CD4-positive, alpha-beta T cell (primary cell): ENCODE measurements at regions of chr22 and their contacts with region 1.

Region 1: DNA sequence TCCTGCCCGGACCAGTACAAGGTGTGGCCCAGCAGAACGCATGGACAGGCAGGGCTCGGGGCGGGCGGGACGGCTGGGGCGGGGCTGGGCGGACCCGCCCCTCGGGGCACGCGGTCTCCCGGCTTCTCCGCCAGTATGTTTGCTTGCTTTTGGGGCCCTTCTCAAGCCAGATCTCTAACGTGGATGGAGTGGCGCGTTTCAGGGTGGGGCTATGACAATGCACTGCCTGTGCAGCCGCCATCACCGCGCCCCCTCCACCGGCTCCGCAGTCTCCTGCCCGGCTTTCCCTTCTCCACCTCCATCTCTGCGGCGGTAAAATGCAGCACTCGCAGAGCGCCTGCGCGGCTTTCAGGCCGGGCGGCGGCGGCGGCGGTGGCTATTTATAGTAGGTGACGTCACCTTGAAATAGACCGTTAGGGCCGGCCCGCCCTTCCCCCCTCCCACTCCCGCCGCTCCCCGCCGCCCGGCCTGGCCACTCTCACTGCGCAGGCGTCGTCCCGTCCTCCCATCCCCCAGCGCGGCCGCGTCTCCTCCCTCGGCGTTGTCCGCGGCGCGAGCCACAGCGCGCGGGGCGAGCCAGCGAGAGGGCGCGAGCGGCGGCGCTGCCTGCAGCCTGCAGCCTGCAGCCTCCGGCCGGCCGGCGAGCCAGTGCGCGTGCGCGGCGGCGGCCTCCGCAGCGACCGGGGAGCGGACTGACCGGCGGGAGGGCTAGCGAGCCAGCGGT is at the start of gene YWHAH:
- DNase-seq: peak; percentile 72 to 93 (median 81)
- ATAC-seq: peak; percentile 65
- H3K4me3 ChIP-seq: peak within 1 kb of the TSS; percentile 73
- H3K4me3 Mint-ChIP-seq: peak within 1 kb of the TSS; percentile 94
- H3K27ac ChIP-seq: peak within 1 kb of the TSS; percentile 77 to 84
- H3K27ac Mint-ChIP-seq: no peak within 1 kb of the TSS
- H3K4me1 ChIP-seq: peaks cover 27% of the 10 kb centered on the region
- H3K4me1 Mint-ChIP-seq: peaks cover 19% of the 10 kb centered on the region
- H3K27me3 ChIP-seq: no peaks in the 10 kb centered on the region
- H3K27me3 Mint-ChIP-seq: no peaks in the 10 kb centered on the region
- CTCF ChIP-seq: no peak
- total RNA-seq, gene YWHAH: 24.4 to 26.1 TPM

Region 2: GRCh38 chr22:30591588-30592359 is 1352.4 kb before region 1 on chr22 and contains the start of gene PES1:
- CTCF ChIA-PET with region 1: no interaction called
- POLR2A ChIA-PET with region 1: no interaction called
- intact Hi-C with region 1: loop called in 1 of 2 experiments (anchors 10 kb)
- DNase-seq: peak; percentile 91 to 99 (median 94)
- ATAC-seq: peak; percentile 96
- H3K4me3 ChIP-seq: peak within 1 kb of the TSS; percentile 96
- H3K4me3 Mint-ChIP-seq: no peak within 1 kb of the TSS
- H3K27ac ChIP-seq: peak within 1 kb of the TSS; percentile 85 to 97
- H3K27ac Mint-ChIP-seq: no peak within 1 kb of the TSS
- H3K4me1 ChIP-seq: peaks cover 16% of the 10 kb centered on the region
- H3K4me1 Mint-ChIP-seq: no peaks in the 10 kb centered on the region
- H3K27me3 ChIP-seq: no peaks in the 10 kb centered on the region
- H3K27me3 Mint-ChIP-seq: no peaks in the 10 kb centered on the region
- CTCF ChIP-seq: no peak
- total RNA-seq, gene PES1: 28.4 to 30.5 TPM

Region 3: GRCh38 chr22:31661851-31662656 is 282.1 kb before region 1 on chr22 and contains the start of gene PISD:
- CTCF ChIA-PET with region 1: interaction called, 3 read pairs
- POLR2A ChIA-PET with region 1: interaction called, 9 read pairs
- intact Hi-C with region 1: loop called (anchors 1 kb)
- DNase-seq: peak; percentile 92 to 99 (median 96)
- ATAC-seq: peak; percentile 90
- H3K4me3 ChIP-seq: peak within 1 kb of the TSS; percentile 95
- H3K4me3 Mint-ChIP-seq: peak within 1 kb of the TSS; percentile 99
- H3K27ac ChIP-seq: peak within 1 kb of the TSS; percentile 62 to 70
- H3K27ac Mint-ChIP-seq: peak within 1 kb of the TSS; percentile 98
- H3K4me1 ChIP-seq: peaks cover 29% of the 10 kb centered on the region
- H3K4me1 Mint-ChIP-seq: peaks cover 38% of the 10 kb centered on the region
- H3K27me3 ChIP-seq: no peaks in the 10 kb centered on the region
- H3K27me3 Mint-ChIP-seq: no peaks in the 10 kb centered on the region
- CTCF ChIP-seq: no peak
- total RNA-seq, gene PISD: 23.4 to 25.3 TPM

Region 4: GRCh38 chr22:31846161-31847115 is 97.7 kb before region 1 on chr22:
- CTCF ChIA-PET with region 1: no interaction called
- POLR2A ChIA-PET with region 1: no interaction called
- intact Hi-C with region 1: loop called in 1 of 2 experiments (anchors 10 kb)
- DNase-seq: peak in 2 of 14 experiments; percentile 10 to 15
- ATAC-seq: no peak
- H3K4me3 ChIP-seq: no peak overlapping the region
- H3K4me3 Mint-ChIP-seq: no peak overlapping the region
- H3K27ac ChIP-seq: no peak overlapping the region
- H3K27ac Mint-ChIP-seq: no peak overlapping the region
- H3K4me1 ChIP-seq: no peaks in the 10 kb centered on the region
- H3K4me1 Mint-ChIP-seq: no peaks in the 10 kb centered on the region
- H3K27me3 ChIP-seq: no peaks in the 10 kb centered on the region
- H3K27me3 Mint-ChIP-seq: no peaks in the 10 kb centered on the region
- CTCF ChIP-seq: no peak

Region 5: DNA sequence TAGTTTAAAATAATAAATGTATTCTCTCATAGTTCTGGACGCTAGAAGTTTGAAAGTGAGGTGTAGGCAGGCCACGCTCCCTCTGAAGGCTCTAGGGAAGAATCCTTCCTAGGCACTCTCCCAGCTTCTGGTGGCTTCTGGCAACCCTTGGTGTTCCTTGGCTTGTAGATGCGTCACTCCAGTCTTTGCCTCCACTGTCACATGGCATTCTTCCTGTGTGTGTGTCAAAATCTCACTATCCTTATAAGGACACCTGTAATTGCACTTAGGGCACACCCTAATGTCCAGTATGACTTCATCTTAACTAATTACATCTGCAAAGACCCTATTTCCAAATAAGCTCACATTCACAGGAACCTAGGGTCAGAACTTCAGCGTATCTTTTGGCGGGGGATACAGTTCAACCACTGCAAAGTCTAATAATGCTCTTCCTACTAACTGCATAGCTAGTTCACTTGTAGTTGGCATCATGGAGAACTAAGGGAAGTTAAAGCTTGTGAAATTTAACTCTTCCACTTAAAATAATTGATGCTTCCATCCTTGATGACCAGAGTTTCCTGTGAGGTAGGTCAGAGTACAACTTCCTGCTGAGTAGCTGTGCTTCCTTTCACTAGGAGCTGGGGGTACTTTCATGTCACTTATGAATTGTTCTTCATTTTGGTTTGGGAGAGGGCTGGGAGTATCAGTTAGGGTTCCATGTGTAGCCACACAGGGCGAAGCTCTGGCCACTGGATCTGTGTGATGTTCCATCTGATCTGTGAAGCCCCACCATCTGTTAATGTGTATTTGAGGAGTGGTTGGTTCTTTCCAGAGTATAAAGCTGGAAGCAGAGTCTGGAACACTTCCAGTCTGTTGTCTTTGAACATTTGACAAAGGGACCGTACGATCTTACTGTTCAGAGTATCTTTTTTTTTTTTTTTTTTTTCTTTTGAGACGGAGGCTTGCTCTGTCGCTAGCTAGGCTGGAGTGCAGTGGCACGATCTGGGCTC is 10.7 kb after region 1 on chr22:
- CTCF ChIA-PET with region 1: interaction called, 4 read pairs
- POLR2A ChIA-PET with region 1: interaction called, 48 read pairs
- intact Hi-C with region 1: no loop called
- DNase-seq: peak in 1 of 14 experiments; percentile 38
- ATAC-seq: peak; percentile 60
- H3K4me3 ChIP-seq: no peak overlapping the region
- H3K4me3 Mint-ChIP-seq: peak overlapping the region; percentile 31
- H3K27ac ChIP-seq: peak overlapping the region in 1 of 2 donors; percentile 39
- H3K27ac Mint-ChIP-seq: peak overlapping the region; percentile 86
- H3K4me1 ChIP-seq: peaks cover 73% of the 10 kb centered on the region
- H3K4me1 Mint-ChIP-seq: peaks cover 83% of the 10 kb centered on the region
- H3K27me3 ChIP-seq: no peaks in the 10 kb centered on the region
- H3K27me3 Mint-ChIP-seq: no peaks in the 10 kb centered on the region
- CTCF ChIP-seq: no peak